CD4-positive, alpha-beta T cell (primary cell): ENCODE measurements at regions of chr6 and their contacts with region 1.

Region 1: DNA sequence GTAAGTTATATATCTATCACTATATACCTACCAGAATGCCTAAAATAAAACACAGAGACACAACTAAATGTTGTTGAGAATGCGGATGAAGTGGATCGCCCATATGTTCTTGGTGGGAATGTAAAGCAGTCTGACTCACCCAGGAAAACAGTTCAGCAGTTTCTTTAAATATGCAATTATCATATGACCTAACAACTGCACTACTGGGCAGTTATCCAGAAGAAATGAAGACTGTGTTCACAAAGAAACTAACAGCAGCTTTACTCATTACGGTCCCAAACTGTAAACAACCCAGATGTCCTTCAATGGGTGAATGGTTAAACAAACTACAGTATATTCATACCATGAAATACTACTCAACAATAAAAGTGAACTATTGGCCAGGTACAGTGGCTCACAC is 14.3 kb upstream of the ZC3H12D start:
- DNase-seq: no peak
- ATAC-seq: no peak
- H3K4me3 ChIP-seq: no peak overlapping the region
- H3K4me3 Mint-ChIP-seq: no peak overlapping the region
- H3K27ac ChIP-seq: no peak overlapping the region
- H3K27ac Mint-ChIP-seq: peak overlapping the region; percentile 69
- H3K4me1 ChIP-seq: peaks cover 33% of the 10 kb centered on the region
- H3K4me1 Mint-ChIP-seq: peaks cover 62% of the 10 kb centered on the region
- H3K27me3 ChIP-seq: no peaks in the 10 kb centered on the region
- H3K27me3 Mint-ChIP-seq: no peaks in the 10 kb centered on the region
- CTCF ChIP-seq: no peak

Region 2: GRCh38 chr6:149200276-149200938 is 298.7 kb before region 1 on chr6:
- CTCF ChIA-PET with region 1: no interaction called
- POLR2A ChIA-PET with region 1: no interaction called
- intact Hi-C with region 1: no loop called
- DNase-seq: no peak
- ATAC-seq: no peak
- H3K4me3 ChIP-seq: no peak overlapping the region
- H3K4me3 Mint-ChIP-seq: no peak overlapping the region
- H3K27ac ChIP-seq: no peak overlapping the region
- H3K27ac Mint-ChIP-seq: no peak overlapping the region
- H3K4me1 ChIP-seq: no peaks in the 10 kb centered on the region
- H3K4me1 Mint-ChIP-seq: no peaks in the 10 kb centered on the region
- H3K27me3 ChIP-seq: no peaks in the 10 kb centered on the region
- H3K27me3 Mint-ChIP-seq: no peaks in the 10 kb centered on the region
- CTCF ChIP-seq: no peak

Region 3: DNA sequence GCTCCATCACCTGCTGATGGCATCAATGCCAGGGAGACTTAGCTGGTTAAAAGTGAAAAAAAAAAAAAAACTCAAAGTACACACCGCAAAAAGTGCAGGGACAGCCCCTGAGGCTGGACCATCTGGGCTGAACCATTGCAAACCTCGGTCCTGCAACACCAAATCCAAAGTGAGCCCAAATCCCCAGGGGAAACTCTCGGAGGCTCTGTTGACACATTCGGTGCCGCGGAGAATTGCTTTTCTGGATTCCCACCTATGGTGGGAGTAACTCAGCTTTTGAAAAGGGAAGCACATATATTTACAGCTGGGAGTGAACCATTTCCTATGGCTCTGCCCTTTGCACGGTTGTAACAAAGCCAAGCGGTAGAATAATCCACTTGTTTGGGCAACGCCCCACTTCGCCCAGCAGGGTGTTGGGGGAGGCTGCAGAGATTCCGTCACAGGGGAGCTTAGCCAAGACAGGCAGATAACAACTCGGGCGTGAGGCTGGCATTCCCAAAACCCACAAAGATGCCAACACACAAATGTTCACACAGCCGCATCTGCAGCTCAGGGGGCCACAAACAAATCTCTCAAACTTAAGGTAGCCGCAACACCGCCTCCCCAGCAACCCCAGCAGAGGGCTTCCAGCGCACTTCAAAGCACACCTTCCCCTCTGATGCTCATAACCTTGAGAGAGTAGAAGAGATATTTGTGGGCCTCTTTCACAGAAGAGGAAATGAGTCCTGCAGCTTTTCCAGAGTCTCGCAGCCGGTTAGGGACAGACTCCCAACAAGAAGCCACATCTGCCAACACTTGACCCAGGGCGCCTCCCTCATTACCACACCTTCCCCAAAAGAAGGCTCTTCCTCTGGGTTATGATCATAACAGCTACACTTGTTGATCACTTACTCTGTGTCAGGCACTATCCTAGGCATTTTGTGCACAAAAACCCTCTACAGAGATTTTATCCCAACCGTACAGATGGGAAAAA is 25.7 kb before region 1 on chr6:
- CTCF ChIA-PET with region 1: no interaction called
- POLR2A ChIA-PET with region 1: interaction called, 11 read pairs
- intact Hi-C with region 1: no loop called
- DNase-seq: peak in 4 of 14 experiments; percentile 27 to 62 (median 42)
- ATAC-seq: peak; percentile 61
- H3K4me3 ChIP-seq: peak overlapping the region; percentile 4
- H3K4me3 Mint-ChIP-seq: peak overlapping the region; percentile 60
- H3K27ac ChIP-seq: peak overlapping the region; percentile 3 to 27
- H3K27ac Mint-ChIP-seq: peak overlapping the region; percentile 82
- H3K4me1 ChIP-seq: peaks cover 94% of the 10 kb centered on the region
- H3K4me1 Mint-ChIP-seq: peaks cover 53% of the 10 kb centered on the region
- H3K27me3 ChIP-seq: no peaks in the 10 kb centered on the region
- H3K27me3 Mint-ChIP-seq: no peaks in the 10 kb centered on the region
- CTCF ChIP-seq: peak; percentile 3

Region 4: DNA sequence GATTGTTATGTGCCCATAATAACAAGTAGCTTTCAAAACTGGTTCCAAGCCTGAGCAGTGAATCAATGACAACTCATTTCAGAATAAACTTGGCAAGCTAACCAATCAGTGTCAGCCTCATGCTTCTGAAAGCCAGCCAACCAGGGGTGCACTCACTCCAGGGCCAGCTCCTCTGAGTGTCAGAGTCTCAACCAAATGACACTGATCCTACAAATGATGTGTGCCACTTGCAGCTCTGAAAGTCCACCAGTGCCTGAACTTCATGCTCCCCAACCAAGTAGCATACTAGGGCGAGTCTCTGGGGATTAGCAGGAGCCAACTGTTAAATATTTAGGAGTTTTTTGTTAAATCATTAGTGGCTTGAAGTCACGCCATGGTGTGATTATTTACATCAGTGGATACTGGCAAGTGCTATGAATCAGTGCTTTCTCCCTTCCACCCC is 874.2 kb after region 1 on chr6:
- CTCF ChIA-PET with region 1: no interaction called
- POLR2A ChIA-PET with region 1: no interaction called
- intact Hi-C with region 1: no loop called
- DNase-seq: no peak
- ATAC-seq: no peak
- H3K4me3 ChIP-seq: no peak overlapping the region
- H3K4me3 Mint-ChIP-seq: no peak overlapping the region
- H3K27ac ChIP-seq: no peak overlapping the region
- H3K27ac Mint-ChIP-seq: no peak overlapping the region
- H3K4me1 ChIP-seq: no peaks in the 10 kb centered on the region
- H3K4me1 Mint-ChIP-seq: no peaks in the 10 kb centered on the region
- H3K27me3 ChIP-seq: peaks cover 0 to 4% of the 10 kb centered on the region in 2 experiments
- H3K27me3 Mint-ChIP-seq: peaks cover 9% of the 10 kb centered on the region
- CTCF ChIP-seq: no peak